Activated CD4-positive, alpha-beta T cell treated with anti-CD3 and anti-CD28 coated beads, Interleukin-2, amount 10 ng/mL, durations not matched to agents 24 days and 14 days (primary cell): ENCODE measurements at regions of chr11 and their contacts with region 1.

Region 1: DNA sequence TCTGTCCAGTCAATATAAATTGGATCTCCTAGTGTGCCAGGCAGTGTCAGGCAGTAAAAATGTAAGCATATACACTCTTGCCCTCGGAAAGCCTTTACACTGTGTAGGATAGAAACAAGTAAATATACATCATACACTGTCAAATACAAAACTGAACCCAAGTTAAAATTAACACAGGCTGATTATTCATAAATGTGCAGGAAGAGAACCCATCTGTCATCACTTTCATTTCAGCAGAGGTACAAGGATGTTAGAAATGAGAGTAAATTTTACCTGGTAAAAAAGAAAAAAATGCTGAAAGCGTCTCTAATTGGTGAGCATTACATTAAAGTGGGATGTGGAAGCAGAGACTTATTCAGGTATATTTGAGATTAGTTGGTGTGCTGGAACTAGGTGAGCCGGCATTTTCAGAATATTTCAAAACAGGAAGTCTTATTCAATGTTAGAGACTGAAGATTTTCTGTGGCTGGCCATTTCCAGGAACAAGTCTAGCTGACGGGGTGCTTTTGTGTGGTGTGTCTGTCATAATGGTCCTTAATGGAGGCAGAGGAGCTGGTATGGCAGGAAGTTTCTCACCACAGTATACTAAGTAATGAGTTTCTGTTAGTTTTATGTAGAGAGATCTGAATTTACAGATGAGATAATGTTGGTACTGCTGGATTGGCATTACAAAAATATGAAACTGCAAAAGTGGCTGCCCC is 192.6 kb downstream of the CASP12 start:
- DNase-seq: peak; percentile 93
- H3K4me3 Mint-ChIP-seq: peak overlapping the region; percentile 86
- H3K27ac Mint-ChIP-seq: peak overlapping the region; percentile 94
- H3K4me1 Mint-ChIP-seq: peaks cover 42% of the 10 kb centered on the region
- H3K27me3 Mint-ChIP-seq: no peaks in the 10 kb centered on the region

Region 2: GRCh38 chr11:104609311-104610085 is 96.1 kb before region 1 on chr11:
- intact Hi-C with region 1: loop called (anchors 5 kb)
- DNase-seq: peak; percentile 82
- H3K4me3 Mint-ChIP-seq: no peak overlapping the region
- H3K27ac Mint-ChIP-seq: no peak overlapping the region
- H3K4me1 Mint-ChIP-seq: peaks cover 14% of the 10 kb centered on the region
- H3K27me3 Mint-ChIP-seq: peaks cover 8% of the 10 kb centered on the region

Region 3: GRCh38 chr11:104694259-104695064 is 11.2 kb before region 1 on chr11:
- intact Hi-C with region 1: no loop called
- DNase-seq: no peak
- H3K4me3 Mint-ChIP-seq: no peak overlapping the region
- H3K27ac Mint-ChIP-seq: no peak overlapping the region
- H3K4me1 Mint-ChIP-seq: peaks cover 2% of the 10 kb centered on the region
- H3K27me3 Mint-ChIP-seq: no peaks in the 10 kb centered on the region

Region 4: DNA sequence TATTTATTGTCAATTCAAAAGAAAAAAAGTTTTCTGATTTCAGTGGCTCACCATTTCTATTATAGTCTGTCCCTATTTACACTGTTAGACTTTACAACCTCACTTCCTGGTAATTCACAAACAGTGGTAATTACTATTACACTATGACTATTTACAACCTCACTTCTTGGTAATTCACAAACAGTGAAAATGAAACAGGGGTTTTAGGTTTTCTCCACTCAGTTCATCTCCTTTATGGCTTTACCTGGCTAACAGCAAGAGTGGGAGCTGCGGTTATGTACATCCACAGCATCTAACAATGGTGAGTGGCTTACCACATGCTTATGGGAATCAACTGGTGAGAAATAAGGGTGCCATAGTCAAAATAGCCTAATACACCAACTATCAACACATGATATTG is 26.2 kb after region 1 on chr11:
- intact Hi-C with region 1: loop called (anchors 2 kb)
- DNase-seq: peak; percentile 65
- H3K4me3 Mint-ChIP-seq: no peak overlapping the region
- H3K27ac Mint-ChIP-seq: peak overlapping the region; percentile 15
- H3K4me1 Mint-ChIP-seq: peaks cover 20% of the 10 kb centered on the region
- H3K27me3 Mint-ChIP-seq: no peaks in the 10 kb centered on the region

Region 5: GRCh38 chr11:104876861-104877431 is 171.3 kb after region 1 on chr11:
- intact Hi-C with region 1: loop called (anchors 10 kb)
- DNase-seq: peak; percentile 59
- H3K4me3 Mint-ChIP-seq: peak overlapping the region; percentile 30
- H3K27ac Mint-ChIP-seq: peak overlapping the region; percentile 34
- H3K4me1 Mint-ChIP-seq: peaks cover 29% of the 10 kb centered on the region
- H3K27me3 Mint-ChIP-seq: no peaks in the 10 kb centered on the region

Region 6: DNA sequence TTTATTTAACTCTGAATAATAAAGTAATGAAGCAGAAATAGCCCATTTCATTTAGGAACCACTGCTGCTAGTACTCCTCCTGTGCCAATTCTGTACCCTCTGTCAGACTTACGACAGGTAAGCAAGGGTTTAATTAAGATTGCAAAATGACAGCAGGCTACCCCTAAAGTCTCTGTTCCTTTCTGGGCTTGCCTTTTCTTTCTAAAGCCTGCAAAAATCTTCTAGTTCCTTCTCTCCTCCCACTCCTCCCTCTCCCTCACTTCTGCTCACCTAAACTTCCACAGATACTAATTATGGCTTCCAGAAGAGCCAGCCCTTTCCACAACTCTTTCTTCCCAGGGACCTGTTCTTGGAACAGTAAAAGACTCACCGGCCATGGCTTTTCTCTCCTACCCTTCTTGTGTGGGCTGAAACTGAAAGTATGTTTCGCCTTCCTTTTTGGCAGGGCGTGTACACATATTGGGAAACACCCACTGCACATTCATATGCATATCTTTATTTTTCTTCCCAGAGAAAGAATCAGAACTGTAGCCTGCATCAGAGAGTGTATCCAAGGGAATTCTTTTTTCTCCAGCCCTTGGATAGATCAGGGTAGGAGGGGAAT is 339.4 kb after region 1 on chr11 and contains the start of gene CARD16:
- intact Hi-C with region 1: loop called (anchors 5 kb)
- DNase-seq: peak; percentile 85
- H3K4me3 Mint-ChIP-seq: peak within 1 kb of the TSS; percentile 88
- H3K27ac Mint-ChIP-seq: peak within 1 kb of the TSS; percentile 83
- H3K4me1 Mint-ChIP-seq: peaks cover 35% of the 10 kb centered on the region
- H3K27me3 Mint-ChIP-seq: no peaks in the 10 kb centered on the region
- total RNA-seq, gene CARD16: 7.2 and 9.0 TPM in 2 replicates

Region 7: DNA sequence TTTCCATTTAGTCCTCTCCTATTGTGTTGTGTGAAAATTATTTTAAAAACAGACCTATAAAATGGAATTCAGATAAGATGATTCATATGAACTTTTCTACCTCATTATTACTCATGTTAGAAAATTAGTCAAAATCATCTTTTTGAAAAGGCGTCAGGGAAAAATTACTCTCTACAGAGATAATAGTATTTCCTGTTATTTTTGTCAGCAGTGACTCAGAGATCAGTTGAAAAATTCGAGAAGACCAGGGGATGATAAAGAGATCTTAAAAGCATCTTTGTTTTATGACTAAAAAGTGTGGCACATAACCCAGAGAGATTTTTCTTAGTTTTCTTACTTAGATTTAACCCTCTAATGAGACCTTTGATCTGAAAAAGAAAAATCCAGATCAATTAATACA is 591.8 kb after region 1 on chr11:
- intact Hi-C with region 1: loop called (anchors 10 kb)
- DNase-seq: no peak
- H3K4me3 Mint-ChIP-seq: no peak overlapping the region
- H3K27ac Mint-ChIP-seq: no peak overlapping the region
- H3K4me1 Mint-ChIP-seq: peaks cover 3% of the 10 kb centered on the region
- H3K27me3 Mint-ChIP-seq: no peaks in the 10 kb centered on the region